ENCODE measurements at regions of chr17 and their contacts with region 1.

Region 1: DNA sequence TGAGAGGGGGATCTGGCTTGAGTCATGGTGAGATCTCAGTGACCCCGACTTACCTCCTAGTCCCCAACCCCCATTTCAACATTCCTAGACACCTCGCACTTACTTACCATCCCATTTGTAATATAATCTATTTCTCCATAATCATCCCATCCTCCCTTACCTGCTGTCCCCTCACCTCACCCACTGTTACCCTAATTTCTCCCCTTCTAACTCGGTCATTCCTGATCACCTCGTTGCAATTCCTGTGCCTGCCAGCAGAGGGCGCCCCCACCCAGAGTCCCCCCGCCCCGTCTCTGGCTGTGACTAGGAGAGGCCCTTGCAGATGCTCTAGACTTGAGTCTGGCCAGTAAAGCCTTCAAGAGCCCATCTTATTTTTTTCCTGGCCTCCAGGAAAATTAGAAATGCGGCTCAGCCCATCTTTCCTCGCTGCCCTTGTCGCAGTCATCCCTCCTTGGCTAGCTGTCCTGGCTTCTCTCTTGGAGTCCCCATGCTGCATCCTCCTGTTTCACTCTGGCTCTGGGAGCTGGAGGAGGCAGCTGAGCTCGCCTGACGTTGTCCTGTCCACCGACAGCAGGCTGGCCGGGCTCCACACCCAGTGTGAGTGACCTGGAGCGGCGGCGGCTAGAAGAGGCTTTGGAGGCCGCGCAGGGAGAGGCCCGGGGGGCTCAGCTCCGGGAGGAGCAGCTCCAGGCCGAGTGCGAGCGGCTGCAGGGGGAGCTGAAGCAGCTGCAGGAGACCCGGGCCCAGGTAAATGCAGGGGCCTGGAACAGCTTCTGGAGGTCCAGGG is 5.0 kb downstream of the TBKBP1 start:
- DNase-seq: peak; percentile 85 to 88
- H3K4me3 ChIP-seq: no peak overlapping the region
- H3K4me3 Mint-ChIP-seq: no peak overlapping the region
- H3K27ac Mint-ChIP-seq: no peak overlapping the region
- H3K4me1 ChIP-seq: peaks cover 6% of the 10 kb centered on the region
- H3K4me1 Mint-ChIP-seq: peaks cover 7% of the 10 kb centered on the region
- H3K27me3 ChIP-seq: no peaks in the 10 kb centered on the region
- H3K27me3 Mint-ChIP-seq: no peaks in the 10 kb centered on the region
- CTCF ChIP-seq: peak; percentile 100

Region 2: GRCh38 chr17:47649153-47649971 is 49.6 kb before region 1 on chr17 and contains the start of gene KPNB1:
- CTCF ChIA-PET with region 1: interaction called, 13 read pairs
- POLR2A ChIA-PET with region 1: interaction called, 15 read pairs
- intact Hi-C with region 1: no loop called
- DNase-seq: peak; percentile 100
- H3K4me3 ChIP-seq: peak within 1 kb of the TSS; percentile 92
- H3K4me3 Mint-ChIP-seq: peak within 1 kb of the TSS; percentile 87
- H3K27ac Mint-ChIP-seq: peak within 1 kb of the TSS; percentile 83
- H3K4me1 ChIP-seq: peaks cover 29% of the 10 kb centered on the region
- H3K4me1 Mint-ChIP-seq: peaks cover 27% of the 10 kb centered on the region
- H3K27me3 ChIP-seq: no peaks in the 10 kb centered on the region
- H3K27me3 Mint-ChIP-seq: no peaks in the 10 kb centered on the region
- CTCF ChIP-seq: peak in 1 of 2 experiments; percentile 2
- total RNA-seq, gene KPNB1: 967 and 1,072 TPM in 2 replicates

Region 3: GRCh38 chr17:47717261-47717697 is 18.3 kb after region 1 on chr17:
- CTCF ChIA-PET with region 1: interaction called, 8 read pairs
- POLR2A ChIA-PET with region 1: no interaction called
- intact Hi-C with region 1: loop called (anchors 1 kb)
- DNase-seq: no peak
- H3K4me3 ChIP-seq: no peak overlapping the region
- H3K4me3 Mint-ChIP-seq: no peak overlapping the region
- H3K27ac Mint-ChIP-seq: no peak overlapping the region
- H3K4me1 ChIP-seq: peaks cover 10% of the 10 kb centered on the region; the same call in 1 of the 2 replicates
- H3K4me1 Mint-ChIP-seq: peaks cover 6% of the 10 kb centered on the region
- H3K27me3 ChIP-seq: peaks cover 9% of the 10 kb centered on the region
- H3K27me3 Mint-ChIP-seq: peaks cover 48% of the 10 kb centered on the region
- CTCF ChIP-seq: peak; percentile 55 to 64

Region 4: GRCh38 chr17:47742319-47743181 is 43.6 kb after region 1 on chr17:
- CTCF ChIA-PET with region 1: interaction called, 7 read pairs
- POLR2A ChIA-PET with region 1: no interaction called
- intact Hi-C with region 1: loop called (anchors 2 kb)
- DNase-seq: peak; percentile 65 to 77
- H3K4me3 ChIP-seq: no peak overlapping the region
- H3K4me3 Mint-ChIP-seq: no peak overlapping the region
- H3K27ac Mint-ChIP-seq: no peak overlapping the region
- H3K4me1 ChIP-seq: 0 out of 2 replicates have a peak, but pooled peaks cover 7% of the 10 kb centered on the region
- H3K4me1 Mint-ChIP-seq: no peaks in the 10 kb centered on the region
- H3K27me3 ChIP-seq: no peaks in the 10 kb centered on the region; the same call in 1 of the 2 replicates
- H3K27me3 Mint-ChIP-seq: peaks cover 28% of the 10 kb centered on the region
- CTCF ChIP-seq: peak; percentile 89 to 96

Region 5: GRCh38 chr17:47789611-47790561 is 90.9 kb after region 1 on chr17:
- CTCF ChIA-PET with region 1: interaction called, 11 read pairs
- POLR2A ChIA-PET with region 1: no interaction called
- intact Hi-C with region 1: no loop called
- DNase-seq: peak; percentile 83 to 88
- H3K4me3 ChIP-seq: peak overlapping the region; percentile 39
- H3K4me3 Mint-ChIP-seq: peak overlapping the region; percentile 70
- H3K27ac Mint-ChIP-seq: no peak overlapping the region
- H3K4me1 ChIP-seq: peaks cover 9% of the 10 kb centered on the region; the same call in 1 of the 2 replicates
- H3K4me1 Mint-ChIP-seq: peaks cover 17% of the 10 kb centered on the region
- H3K27me3 ChIP-seq: peaks cover 5% of the 10 kb centered on the region
- H3K27me3 Mint-ChIP-seq: peaks cover 47% of the 10 kb centered on the region
- CTCF ChIP-seq: peak; percentile 76 to 90